ENCODE measurements at regions of chr5 and their contacts with region 1.

Region 1: GRCh38 chr5:177071666-177072385 is 14.9 kb upstream of the FGFR4 start:
- DNase-seq: peak; percentile 69
- H3K4me3 ChIP-seq: no peak overlapping the region
- H3K27ac ChIP-seq: no peak overlapping the region
- H3K27me3 ChIP-seq: no peaks in the 10 kb centered on the region
- CTCF ChIP-seq: peak; percentile 95

Region 2: DNA sequence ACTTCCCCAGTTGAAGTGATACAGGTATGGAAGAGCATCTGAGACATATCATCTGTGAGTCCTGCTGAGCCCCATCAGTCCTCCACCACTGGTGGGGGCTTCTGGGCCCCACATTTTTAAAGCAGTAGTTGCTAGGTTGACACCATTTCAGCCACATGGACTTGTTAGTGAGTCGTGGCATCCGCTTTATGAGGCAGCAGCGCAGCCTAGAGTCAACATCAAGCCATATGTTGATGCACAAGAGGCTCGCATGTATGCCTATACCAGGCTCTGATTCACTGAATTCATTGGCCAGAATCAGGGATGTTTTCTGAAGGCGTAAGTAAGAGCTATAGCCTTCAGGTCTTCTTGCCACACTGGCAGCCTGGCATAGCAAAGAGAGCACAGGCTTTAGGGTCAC is 22.5 kb before region 1 on chr5:
- CTCF ChIA-PET with region 1: interaction called, 17 read pairs
- POLR2A ChIA-PET with region 1: interaction called, 6 read pairs
- DNase-seq: no peak
- H3K4me3 ChIP-seq: no peak overlapping the region
- H3K27ac ChIP-seq: no peak overlapping the region
- H3K27me3 ChIP-seq: no peaks in the 10 kb centered on the region
- CTCF ChIP-seq: no peak

Region 3: GRCh38 chr5:177086924-177087706 is 15.3 kb after region 1 on chr5:
- CTCF ChIA-PET with region 1: interaction called, 81 read pairs
- POLR2A ChIA-PET with region 1: no interaction called
- DNase-seq: no peak
- H3K4me3 ChIP-seq: peak overlapping the region; percentile 56
- H3K27ac ChIP-seq: no peak overlapping the region
- H3K27me3 ChIP-seq: peaks cover 15% of the 10 kb centered on the region
- CTCF ChIP-seq: peak; percentile 45